Activated naive CD8-positive, alpha-beta T cell treated with anti-CD3 and anti-CD28 coated beads, Interleukin-2, amount 10 ng/mL, durations not matched to agents 7 days and 5 days (primary cell): ENCODE measurements at regions of chr19 and their contacts with region 1.

Region 1: DNA sequence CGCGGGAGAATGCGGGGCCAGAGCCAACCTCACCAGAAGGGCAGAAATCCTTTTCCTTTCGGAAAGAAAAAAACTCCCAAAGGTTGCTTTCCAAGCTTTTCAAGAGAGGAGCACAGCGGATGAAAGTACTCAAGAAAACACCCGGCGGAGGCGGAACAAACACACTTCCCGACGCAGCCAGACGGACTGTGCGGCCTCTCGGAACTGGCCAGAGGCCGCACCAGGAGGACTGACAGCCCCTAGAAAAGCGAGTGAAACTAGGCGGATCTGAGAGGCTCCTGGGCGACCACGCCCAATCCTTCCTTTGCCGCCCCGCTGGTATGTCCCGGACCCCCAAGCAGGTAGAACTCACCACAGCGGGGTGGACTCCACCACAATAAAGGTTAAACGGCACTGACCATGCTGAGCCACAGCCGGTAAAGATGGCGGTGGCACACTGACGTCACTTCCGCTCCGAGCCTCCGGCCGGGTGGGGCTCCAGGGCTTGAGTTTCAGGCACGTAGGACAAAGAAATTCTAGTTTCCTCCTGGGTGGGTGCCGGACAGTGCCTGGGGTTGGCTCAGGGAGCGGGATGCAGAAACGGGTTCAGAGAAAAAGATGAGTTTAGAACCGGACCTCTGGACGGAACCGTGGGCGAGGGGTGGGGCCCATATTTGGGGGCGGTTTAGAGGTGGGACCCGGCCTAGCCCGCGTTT is at the start of gene ZNF562:
- DNase-seq: peak; percentile 87
- ATAC-seq: peak; percentile 86
- H3K4me3 Mint-ChIP-seq: peak within 1 kb of the TSS; percentile 95
- H3K27ac Mint-ChIP-seq: peak within 1 kb of the TSS; percentile 99
- H3K4me1 Mint-ChIP-seq: peaks cover 19% of the 10 kb centered on the region
- H3K27me3 Mint-ChIP-seq: no peaks in the 10 kb centered on the region
- total RNA-seq, gene ZNF562: 25.5 to 27.5 TPM

Region 2: GRCh38 chr19:9645472-9645871 is 29.3 kb before region 1 on chr19:
- POLR2A ChIA-PET with region 1: interaction called, 11 read pairs
- DNase-seq: no peak
- ATAC-seq: no peak
- H3K4me3 Mint-ChIP-seq: no peak overlapping the region
- H3K27ac Mint-ChIP-seq: no peak overlapping the region
- H3K4me1 Mint-ChIP-seq: peaks cover 4% of the 10 kb centered on the region
- H3K27me3 Mint-ChIP-seq: no peaks in the 10 kb centered on the region

Region 3: GRCh38 chr19:9658769-9659168 is 16.0 kb before region 1 on chr19:
- POLR2A ChIA-PET with region 1: no interaction called
- DNase-seq: no peak
- ATAC-seq: no peak
- H3K4me3 Mint-ChIP-seq: no peak overlapping the region
- H3K27ac Mint-ChIP-seq: no peak overlapping the region
- H3K4me1 Mint-ChIP-seq: peaks cover 2% of the 10 kb centered on the region
- H3K27me3 Mint-ChIP-seq: no peaks in the 10 kb centered on the region